ENCODE measurements at regions of chr12 and their contacts with region 1.

Region 1: GRCh38 chr12:39145175-39145999 is 240.0 kb upstream of the CPNE8 start:
- DNase-seq: peak in 5 of 10 donors; percentile 3 to 63 (median 28)
- H3K4me3 ChIP-seq: peak overlapping the region; percentile 6 to 71 (median 59)
- H3K27ac ChIP-seq: peak overlapping the region in 3 of 59 donors; percentile 12 to 32 (median 26)
- H3K27me3 ChIP-seq: peaks cover 0 to 47% (median 6%) of the 10 kb centered on the region in 45 donors
- CTCF ChIP-seq: peak in 51 of 56 donors; percentile 17 to 74 (median 50)

Region 2: GRCh38 chr12:38132139-38132538 is 1013.2 kb before region 1 on chr12:
- intact Hi-C with region 1: no loop called
- DNase-seq: no peak
- H3K4me3 ChIP-seq: no peak overlapping the region
- H3K27ac ChIP-seq: no peak overlapping the region
- H3K27me3 ChIP-seq: peaks cover 0 to 22% (median 0%) of the 10 kb centered on the region in 45 donors
- CTCF ChIP-seq: no peak

Region 3: GRCh38 chr12:39272871-39273770 is 127.7 kb after region 1 on chr12:
- intact Hi-C with region 1: loop called in 1 of 2 experiments (anchors 10 kb)
- DNase-seq: peak in 2 of 10 donors; percentile 4 to 21
- H3K4me3 ChIP-seq: no peak overlapping the region
- H3K27ac ChIP-seq: no peak overlapping the region
- H3K27me3 ChIP-seq: peaks cover 0 to 5% (median 0%) of the 10 kb centered on the region in 45 donors
- CTCF ChIP-seq: peak; percentile 58 to 88 (median 74)

Measured in dorsolateral prefrontal cortex (tissue), 120 donors.